Transverse colon (tissue), 4 donors: ENCODE measurements at regions of chr17 and their contacts with region 1.

Region 1: GRCh38 chr17:3976649-3977171 is 12.5 kb upstream of the ATP2A3 start:
- DNase-seq: peak; percentile 93
- H3K4me3 ChIP-seq: no peak overlapping the region
- H3K27ac ChIP-seq: peak overlapping the region; percentile 82 to 89 (median 88)
- H3K4me1 ChIP-seq: peaks cover 10 to 32% (median 31%) of the 10 kb centered on the region in 4 donors
- H3K27me3 ChIP-seq: no peaks in the 10 kb centered on the region
- CTCF ChIP-seq: no peak
- EP300 ChIP-seq: no peak
- POLR2A ChIP-seq: peak; percentile 57

Region 2: DNA sequence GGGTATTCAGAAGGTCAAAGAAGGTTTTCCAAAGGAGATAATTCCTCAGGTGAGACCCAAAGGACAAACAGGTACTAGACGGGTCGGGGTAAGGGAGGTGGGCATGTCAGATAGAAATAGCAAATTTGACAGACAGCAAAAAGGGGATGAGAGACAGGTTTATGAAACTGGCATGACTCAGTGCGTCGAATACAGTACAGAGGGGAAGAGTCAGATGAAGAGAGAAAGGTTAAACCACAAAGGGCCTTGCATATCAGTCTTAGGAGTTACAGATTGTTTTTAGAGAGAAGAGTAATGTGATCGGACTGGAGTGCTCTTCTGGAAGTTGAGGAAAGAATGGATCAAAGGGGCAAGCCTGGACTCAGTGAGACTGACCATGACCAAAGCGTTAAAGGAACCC is 77.7 kb after region 1 on chr17:
- in situ Hi-C with region 1: no loop called
- intact Hi-C with region 1: loop called (anchors 2 kb)
- DNase-seq: no peak
- H3K4me3 ChIP-seq: no peak overlapping the region
- H3K27ac ChIP-seq: no peak overlapping the region
- H3K4me1 ChIP-seq: no peaks in the 10 kb centered on the region
- H3K27me3 ChIP-seq: no peaks in the 10 kb centered on the region
- CTCF ChIP-seq: no peak
- EP300 ChIP-seq: no peak
- POLR2A ChIP-seq: no peak

Region 3: GRCh38 chr17:4090898-4091297 is 114.2 kb after region 1 on chr17:
- in situ Hi-C with region 1: no loop called
- intact Hi-C with region 1: no loop called
- DNase-seq: no peak
- H3K4me3 ChIP-seq: no peak overlapping the region
- H3K27ac ChIP-seq: no peak overlapping the region
- H3K4me1 ChIP-seq: no peaks in the 10 kb centered on the region
- H3K27me3 ChIP-seq: no peaks in the 10 kb centered on the region
- CTCF ChIP-seq: no peak
- EP300 ChIP-seq: no peak
- POLR2A ChIP-seq: no peak

Region 4: DNA sequence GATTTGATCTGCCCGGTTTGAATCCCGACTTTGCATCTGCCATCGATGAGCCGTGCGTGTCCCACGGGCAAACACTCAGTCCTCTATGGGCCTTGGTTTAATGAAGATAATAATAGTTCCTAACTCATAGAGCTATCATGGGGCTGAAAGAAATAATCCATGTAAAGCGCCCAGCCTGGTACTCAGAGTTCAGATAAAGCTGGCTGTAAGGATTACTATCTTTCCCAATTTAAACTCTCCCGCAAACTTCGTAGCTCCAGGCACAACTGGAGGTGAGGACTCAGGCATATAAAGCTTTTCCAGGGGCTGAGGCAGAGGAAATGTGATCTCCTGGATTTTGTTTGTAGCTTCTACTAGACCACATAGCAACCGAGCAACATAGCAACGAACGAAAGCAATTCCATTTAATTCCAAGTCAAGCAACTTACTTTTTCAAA is 648.5 kb after region 1 on chr17:
- in situ Hi-C with region 1: no loop called
- intact Hi-C with region 1: no loop called
- DNase-seq: no peak
- H3K4me3 ChIP-seq: no peak overlapping the region
- H3K27ac ChIP-seq: no peak overlapping the region
- H3K4me1 ChIP-seq: peaks cover 0 to 12% (median 0%) of the 10 kb centered on the region in 4 donors
- H3K27me3 ChIP-seq: no peaks in the 10 kb centered on the region
- CTCF ChIP-seq: no peak
- EP300 ChIP-seq: no peak
- POLR2A ChIP-seq: no peak